Cardiac septum (tissue), 1 donor: ENCODE measurements at regions of chr9 and their contacts with region 1.

Region 1: GRCh38 chr9:133054966-133055365 is 6.8 kb upstream of the CEL start:
- DNase-seq: peak; percentile 88

Region 2: GRCh38 chr9:132862533-132862932 is 192.4 kb before region 1 on chr9:
- intact Hi-C with region 1: no loop called
- DNase-seq: no peak

Region 3: GRCh38 chr9:133074111-133074651 is 19.2 kb after region 1 on chr9:
- intact Hi-C with region 1: no loop called
- DNase-seq: no peak

Region 4: DNA sequence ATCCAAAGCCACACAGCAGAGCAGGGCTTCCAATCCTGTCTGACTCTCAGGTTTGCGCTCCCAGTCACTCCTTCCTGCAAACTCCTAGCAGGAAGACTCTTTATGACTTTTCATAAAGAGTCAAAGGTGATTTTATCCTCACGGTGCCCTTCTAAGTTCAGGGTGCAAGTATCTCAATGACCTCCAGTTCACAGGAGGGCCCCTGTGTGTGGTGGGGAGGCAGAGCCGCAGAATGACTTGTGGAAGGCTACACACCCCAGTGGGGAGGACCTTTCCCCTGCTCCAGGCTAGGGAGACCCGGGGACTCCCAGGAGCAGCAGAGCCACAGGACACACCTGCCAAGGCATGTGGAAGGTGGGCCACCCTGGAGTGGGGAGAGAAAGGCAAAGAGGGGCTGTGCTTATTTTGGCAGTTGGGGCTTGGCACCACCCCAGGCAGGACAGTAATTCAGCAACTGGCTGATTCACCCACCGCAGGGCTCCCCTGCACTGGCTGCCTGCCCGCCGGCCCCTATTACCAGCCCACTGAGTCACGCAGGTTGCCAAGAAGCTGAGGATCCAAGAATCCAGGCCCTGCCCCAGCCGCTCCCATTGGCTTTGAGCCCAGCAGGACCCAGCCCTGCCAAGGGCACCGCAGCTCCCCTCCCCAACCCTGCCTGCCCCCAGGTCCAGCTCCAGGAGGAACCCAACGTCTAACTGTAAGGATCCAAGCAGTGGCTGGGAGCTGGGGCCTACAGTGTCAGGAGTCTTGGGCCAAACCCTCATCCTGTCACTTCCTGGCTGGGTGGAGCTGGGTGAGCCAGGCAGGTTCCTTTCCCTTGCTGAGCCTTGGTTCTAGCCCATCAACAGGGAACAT is 80.2 kb after region 1 on chr9:
- intact Hi-C with region 1: loop called (anchors 5 kb)
- DNase-seq: peak; percentile 84